Tibial artery (tissue), 4 donors: ENCODE measurements at regions of chr7 and their contacts with region 1.

Region 1: DNA sequence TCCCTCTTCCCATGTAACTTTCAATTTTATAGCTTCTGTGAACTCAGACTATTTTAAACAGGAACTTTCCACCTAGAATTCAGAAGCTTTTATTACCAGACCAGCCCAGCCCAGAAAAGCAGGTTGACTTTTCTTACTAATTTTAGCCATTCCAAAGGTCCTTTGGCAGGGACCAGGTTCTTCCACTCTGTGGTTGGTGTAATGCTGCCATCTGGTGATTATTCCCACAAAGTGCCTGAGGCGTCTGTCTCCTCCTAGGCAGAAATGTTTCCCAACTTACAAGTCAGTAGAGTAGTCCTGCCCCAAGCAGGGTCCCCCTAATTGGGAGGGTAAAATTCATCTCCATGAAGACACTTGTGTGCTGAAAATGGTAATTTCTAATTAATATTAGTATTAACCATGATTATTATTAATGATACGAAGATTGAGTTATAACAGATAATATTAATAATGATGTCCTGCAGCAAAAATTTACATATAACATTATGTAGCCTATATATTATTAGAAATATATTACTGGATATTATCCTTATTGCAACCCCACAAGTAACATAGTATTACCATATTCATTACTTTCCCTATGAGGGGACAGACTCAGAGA is 53.0 kb upstream of the PPP1R17 start:
- DNase-seq: peak in 1 of 2 donors; percentile 29
- H3K4me3 ChIP-seq: no peak overlapping the region
- H3K27ac ChIP-seq: no peak overlapping the region
- H3K4me1 ChIP-seq: no peaks in the 10 kb centered on the region
- H3K27me3 ChIP-seq: no peaks in the 10 kb centered on the region
- CTCF ChIP-seq: peak; percentile 46 to 60

Region 2: GRCh38 chr7:31134246-31135188 is 499.5 kb before region 1 on chr7:
- intact Hi-C with region 1: loop called (anchors 10 kb)
- DNase-seq: peak in 1 of 2 donors; percentile 60
- H3K4me3 ChIP-seq: no peak overlapping the region
- H3K27ac ChIP-seq: no peak overlapping the region
- H3K4me1 ChIP-seq: no peaks in the 10 kb centered on the region
- H3K27me3 ChIP-seq: no peaks in the 10 kb centered on the region
- CTCF ChIP-seq: peak; percentile 53 to 68

Region 3: GRCh38 chr7:31432836-31433340 is 201.1 kb before region 1 on chr7:
- intact Hi-C with region 1: loop called (anchors 10 kb)
- DNase-seq: no peak
- H3K4me3 ChIP-seq: no peak overlapping the region
- H3K27ac ChIP-seq: no peak overlapping the region
- H3K4me1 ChIP-seq: no peaks in the 10 kb centered on the region
- H3K27me3 ChIP-seq: peaks cover 0 to 3% of the 10 kb centered on the region in 2 donors
- CTCF ChIP-seq: no peak